Common myeloid progenitor, CD34-positive (primary cell): ENCODE measurements at regions of chr1 and their contacts with region 1.

Region 1: GRCh38 chr1:112466078-112466660 is 42.6 kb upstream of the WNT2B start:
- DNase-seq: peak; percentile 90 to 93 (median 93)
- H3K4me3 ChIP-seq: peak overlapping the region; percentile 20 to 83 (median 66)
- H3K27ac ChIP-seq: no peak overlapping the region
- H3K4me1 ChIP-seq: peaks cover 0 to 9% (median 7%) of the 10 kb centered on the region in 4 experiments
- H3K27me3 ChIP-seq: no peaks in the 10 kb centered on the region

Region 2: DNA sequence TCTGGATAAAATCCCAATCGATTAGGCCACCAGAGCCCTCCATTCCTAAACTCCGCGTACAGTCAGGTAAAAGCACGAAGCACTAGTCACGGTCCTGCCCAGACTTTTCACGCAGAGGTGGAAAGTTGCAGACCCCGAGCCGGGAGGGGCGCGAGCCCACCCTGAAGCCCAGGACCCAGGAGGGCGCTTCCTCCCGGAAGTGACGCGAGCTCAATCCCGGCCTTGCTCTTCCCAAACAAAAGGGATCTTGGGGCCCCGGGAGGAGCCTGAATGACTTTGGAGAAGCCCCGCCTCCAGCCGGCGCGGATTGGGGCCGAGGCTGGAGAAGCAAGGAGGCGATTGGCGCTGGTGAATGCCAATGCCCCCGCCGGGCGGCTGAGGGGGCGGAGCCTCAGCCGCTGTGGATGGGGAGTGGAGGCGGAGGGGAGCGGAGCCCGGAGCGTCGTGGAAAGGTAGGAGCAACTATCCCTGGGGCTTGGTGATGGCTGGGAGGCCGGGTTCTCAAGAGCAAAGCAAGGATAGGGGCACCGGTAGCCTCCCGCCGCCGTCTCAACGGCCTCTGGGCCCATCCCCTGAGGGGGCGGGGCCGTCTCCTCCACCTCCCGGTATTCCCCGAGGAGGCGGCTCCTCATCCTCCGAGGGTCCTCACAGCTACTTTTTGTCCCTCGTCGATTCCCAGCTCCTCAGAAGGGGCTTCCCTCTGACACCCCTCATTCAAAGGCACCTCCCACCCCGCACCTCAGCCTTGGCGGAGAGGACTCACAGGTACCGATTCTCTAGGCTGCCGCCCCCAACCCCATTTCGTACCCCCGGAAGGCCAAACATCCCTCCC is 70.1 kb before region 1 on chr1 and contains the start of gene CTTNBP2NL:
- CTCF ChIA-PET with region 1: interaction called, 78 read pairs
- POLR2A ChIA-PET with region 1: interaction called, 3 read pairs
- DNase-seq: peak; percentile 65 to 72 (median 71)
- H3K4me3 ChIP-seq: peak within 1 kb of the TSS; percentile 85 to 98 (median 93)
- H3K27ac ChIP-seq: peak within 1 kb of the TSS in 1 of 2 experiments; percentile 64
- H3K4me1 ChIP-seq: peaks cover 5 to 36% (median 27%) of the 10 kb centered on the region in 4 experiments
- H3K27me3 ChIP-seq: no peaks in the 10 kb centered on the region

Region 3: GRCh38 chr1:112477550-112477949 is 11.4 kb after region 1 on chr1:
- CTCF ChIA-PET with region 1: interaction called, 12 read pairs
- POLR2A ChIA-PET with region 1: no interaction called
- DNase-seq: no peak
- H3K4me3 ChIP-seq: no peak overlapping the region
- H3K27ac ChIP-seq: no peak overlapping the region
- H3K4me1 ChIP-seq: no peaks in the 10 kb centered on the region
- H3K27me3 ChIP-seq: no peaks in the 10 kb centered on the region

Region 4: DNA sequence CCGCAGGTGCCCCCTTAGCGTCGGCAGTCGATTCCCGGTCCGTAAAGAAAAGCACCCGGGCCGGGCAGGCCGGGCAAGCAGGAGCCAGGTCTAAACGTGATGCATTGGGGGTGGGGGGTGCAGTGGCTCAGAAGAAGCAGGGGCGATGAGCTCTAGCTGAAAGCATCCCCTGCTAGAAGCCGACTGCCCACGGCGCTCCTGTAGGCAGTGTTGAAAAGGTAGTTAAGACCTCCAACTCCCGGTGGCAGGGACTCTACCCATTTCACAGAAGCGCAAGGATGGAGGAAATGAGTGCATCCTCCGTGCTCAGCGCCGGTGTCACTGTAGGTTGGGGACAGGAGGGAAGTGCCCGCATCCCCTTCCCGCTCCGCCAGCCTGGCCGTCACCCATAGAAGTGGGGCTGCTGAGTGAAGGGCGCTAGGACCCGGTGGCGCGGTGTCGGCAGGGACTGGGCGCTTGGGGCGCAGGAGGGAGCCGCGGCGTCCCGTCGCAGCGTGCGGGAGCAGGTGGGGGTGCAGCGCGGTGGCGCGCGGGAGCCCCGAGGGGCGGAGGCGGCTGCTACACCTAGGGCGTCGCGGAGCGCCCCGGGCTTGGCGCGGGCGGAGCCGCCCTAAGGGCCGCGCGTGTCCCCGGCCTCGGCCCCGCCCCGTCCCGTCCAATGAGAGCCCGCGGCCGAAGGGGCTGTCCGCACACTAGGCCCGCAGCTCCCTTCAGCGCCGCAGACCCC is 42.3 kb after region 1 on chr1 and contains the start of gene WNT2B:
- CTCF ChIA-PET with region 1: no interaction called
- POLR2A ChIA-PET with region 1: no interaction called
- DNase-seq: peak in 2 of 3 donors; percentile 49 to 59
- H3K4me3 ChIP-seq: peak within 1 kb of the TSS; percentile 32 to 72 (median 59)
- H3K27ac ChIP-seq: no peak within 1 kb of the TSS
- H3K4me1 ChIP-seq: peaks cover 0 to 19% (median 16%) of the 10 kb centered on the region in 4 experiments
- H3K27me3 ChIP-seq: peaks cover 5 to 82% (median 46%) of the 10 kb centered on the region in 5 experiments

Region 5: GRCh38 chr1:112544011-112544688 is 78.0 kb after region 1 on chr1:
- CTCF ChIA-PET with region 1: no interaction called
- POLR2A ChIA-PET with region 1: no interaction called
- DNase-seq: no peak
- H3K4me3 ChIP-seq: no peak overlapping the region
- H3K27ac ChIP-seq: no peak overlapping the region
- H3K4me1 ChIP-seq: peaks cover 0 to 5% (median 0%) of the 10 kb centered on the region in 4 experiments
- H3K27me3 ChIP-seq: no peaks in the 10 kb centered on the region

Region 6: GRCh38 chr1:112715264-112716053 is 249.3 kb after region 1 on chr1 and contains the start of gene PPM1J:
- CTCF ChIA-PET with region 1: no interaction called
- POLR2A ChIA-PET with region 1: no interaction called
- DNase-seq: peak; percentile 90 to 96 (median 96)
- H3K4me3 ChIP-seq: peak within 1 kb of the TSS; percentile 32 to 89 (median 70)
- H3K27ac ChIP-seq: no peak within 1 kb of the TSS
- H3K4me1 ChIP-seq: peaks cover 0 to 32% (median 29%) of the 10 kb centered on the region in 4 experiments
- H3K27me3 ChIP-seq: peaks cover 0 to 33% (median 3%) of the 10 kb centered on the region in 5 experiments

Region 7: DNA sequence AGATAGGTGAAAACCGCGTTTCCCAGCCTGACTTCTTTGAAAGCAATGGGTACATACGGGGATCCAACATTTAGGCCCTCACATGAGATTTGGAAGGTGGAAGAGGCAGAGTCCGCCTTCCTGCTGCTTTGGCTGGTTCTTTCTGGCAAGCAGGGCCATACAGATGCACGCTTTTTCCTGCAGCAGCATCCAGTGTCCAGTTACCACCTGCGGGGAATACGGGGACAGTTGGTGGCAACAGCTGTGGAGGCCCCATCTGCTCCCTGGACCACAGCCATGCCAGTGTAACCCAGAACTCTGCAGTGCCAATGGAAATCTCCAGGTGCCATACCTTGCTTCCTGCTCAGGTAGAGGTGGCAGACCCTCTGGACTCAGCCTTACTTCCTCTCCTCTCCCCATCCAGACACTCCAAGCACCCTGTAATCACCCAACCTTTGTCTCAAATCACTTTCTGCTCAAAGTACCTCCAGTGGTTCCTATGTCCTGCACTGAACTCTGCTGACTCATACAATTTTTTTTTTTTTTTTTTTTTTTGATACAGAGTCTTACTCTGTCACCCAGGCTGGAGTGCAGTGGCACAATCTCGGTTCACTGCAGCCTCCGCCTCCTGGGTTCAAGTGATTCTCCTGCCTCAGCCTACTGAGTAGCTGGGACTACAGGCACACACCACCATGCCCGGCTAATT is 421.6 kb after region 1 on chr1:
- CTCF ChIA-PET with region 1: no interaction called
- POLR2A ChIA-PET with region 1: no interaction called
- DNase-seq: no peak
- H3K4me3 ChIP-seq: no peak overlapping the region
- H3K27ac ChIP-seq: no peak overlapping the region
- H3K4me1 ChIP-seq: peaks cover 0 to 1% (median 0%) of the 10 kb centered on the region in 4 experiments
- H3K27me3 ChIP-seq: no peaks in the 10 kb centered on the region